ENCODE measurements at regions of chr1 and their contacts with region 1.

Region 1: GRCh38 chr1:1115786-1116700 is at the start of gene C1orf159:
- DNase-seq: peak; percentile 99
- H3K4me3 Mint-ChIP-seq: peak within 1 kb of the TSS; percentile 82
- H3K27ac Mint-ChIP-seq: peak within 1 kb of the TSS; percentile 65
- H3K4me1 Mint-ChIP-seq: peaks cover 17% of the 10 kb centered on the region
- H3K27me3 Mint-ChIP-seq: no peaks in the 10 kb centered on the region
- total RNA-seq, gene C1orf159: 14.9 to 18.6 TPM

Region 2: DNA sequence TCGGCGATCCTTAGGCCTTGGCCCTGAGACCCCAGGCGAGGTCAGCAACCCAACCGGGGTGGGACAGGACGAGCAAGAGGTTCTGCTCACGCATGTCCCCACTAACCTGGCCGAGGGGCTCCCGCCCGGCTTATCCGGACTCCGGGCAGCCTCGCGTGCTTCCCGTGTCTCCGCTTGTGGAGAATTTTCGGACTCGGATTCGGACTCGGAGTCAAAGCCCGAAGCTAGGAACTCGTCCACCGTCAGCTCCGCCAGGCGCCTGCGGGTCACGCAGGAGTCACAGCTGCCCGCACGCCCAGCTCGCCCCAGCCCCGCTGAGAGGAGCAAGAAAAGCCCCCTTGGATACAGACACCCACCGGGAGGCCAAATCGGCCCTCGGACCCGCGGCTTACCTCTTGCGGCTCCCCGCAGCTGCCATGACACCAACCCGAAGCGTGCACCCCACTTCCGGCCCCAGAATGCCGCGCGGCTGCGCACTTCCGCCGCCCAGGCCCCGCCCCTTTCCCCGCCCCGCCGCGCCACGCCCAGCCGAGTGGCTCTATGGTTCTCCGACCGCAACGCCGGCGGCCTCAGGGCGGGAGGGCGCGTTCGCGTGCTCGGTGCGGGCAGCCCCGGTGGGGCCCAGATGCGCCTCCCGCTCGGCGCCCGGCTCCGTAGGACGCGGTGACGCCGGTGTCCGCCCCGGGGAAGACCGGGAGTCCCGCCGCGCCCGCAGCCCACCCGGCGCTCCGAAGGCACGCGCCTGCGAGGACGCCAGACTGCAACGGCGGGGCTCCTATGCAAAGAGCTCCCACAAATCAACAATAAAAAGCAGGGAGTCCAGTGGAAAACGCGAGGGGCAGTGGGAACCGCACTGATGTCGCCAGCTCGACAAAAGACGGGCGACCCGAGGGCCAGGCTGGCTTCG is 157.0 kb before region 1 on chr1 and contains the start of gene NOC2L:
- CTCF ChIA-PET with region 1: no interaction called
- intact Hi-C with region 1: loop called (anchors 1 kb)
- DNase-seq: peak; percentile 97
- H3K4me3 Mint-ChIP-seq: peak within 1 kb of the TSS; percentile 98
- H3K27ac Mint-ChIP-seq: no peak within 1 kb of the TSS
- H3K4me1 Mint-ChIP-seq: peaks cover 17% of the 10 kb centered on the region
- H3K27me3 Mint-ChIP-seq: no peaks in the 10 kb centered on the region
- total RNA-seq, gene NOC2L: 113 to 119 TPM

Region 3: DNA sequence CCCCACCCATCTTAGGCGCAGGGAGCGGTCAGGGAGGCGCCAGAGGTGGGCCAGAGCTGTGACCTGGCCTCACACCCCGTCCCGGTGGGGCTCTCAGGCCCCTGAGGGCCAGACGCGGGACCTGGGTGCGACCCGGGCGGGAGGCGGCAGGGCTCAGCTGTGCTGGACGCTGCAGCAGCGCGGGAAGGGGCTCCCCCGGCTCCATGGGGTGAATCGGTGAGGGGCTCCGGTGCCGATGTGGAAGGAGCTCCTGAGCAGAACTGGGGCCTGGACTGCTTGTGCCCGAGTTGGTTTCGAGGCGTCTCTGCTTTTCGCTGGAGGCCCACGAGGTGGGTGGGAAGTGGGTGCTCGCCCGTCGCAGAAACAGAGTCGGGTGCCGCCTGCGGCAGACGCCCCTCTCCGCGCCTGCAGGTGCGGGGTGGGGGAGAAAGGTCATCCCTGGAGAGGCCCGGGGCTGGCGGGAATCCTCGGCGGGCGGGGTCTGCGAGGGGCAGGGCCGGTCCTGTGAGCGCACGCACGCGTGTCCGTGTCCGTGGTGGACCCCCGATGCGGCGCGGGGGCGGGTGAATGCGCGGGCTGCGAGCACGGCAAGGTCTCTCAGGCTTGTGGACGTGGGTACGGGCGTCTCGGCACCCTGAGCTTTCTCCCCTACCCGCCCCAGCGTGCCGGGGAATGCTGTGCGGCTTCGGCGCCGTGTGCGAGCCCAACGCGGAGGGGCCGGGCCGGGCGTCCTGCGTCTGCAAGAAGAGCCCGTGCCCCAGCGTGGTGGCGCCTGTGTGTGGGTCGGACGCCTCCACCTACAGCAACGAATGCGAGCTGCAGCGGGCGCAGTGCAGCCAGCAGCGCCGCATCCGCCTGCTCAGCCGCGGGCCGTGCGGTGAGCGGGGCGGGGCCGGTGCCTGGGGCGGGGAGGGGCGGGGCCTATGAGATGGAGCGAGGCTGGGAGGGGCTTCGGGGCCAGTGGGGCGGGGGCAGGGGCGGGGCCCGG is 75.7 kb before region 1 on chr1:
- CTCF ChIA-PET with region 1: no interaction called
- intact Hi-C with region 1: loop called (anchors 2 kb)
- DNase-seq: peak; percentile 84
- H3K4me3 Mint-ChIP-seq: peak overlapping the region; percentile 57
- H3K27ac Mint-ChIP-seq: no peak overlapping the region
- H3K4me1 Mint-ChIP-seq: peaks cover 19% of the 10 kb centered on the region
- H3K27me3 Mint-ChIP-seq: peaks cover 14% of the 10 kb centered on the region

Region 4: GRCh38 chr1:1100296-1100695 is 15.7 kb before region 1 on chr1:
- CTCF ChIA-PET with region 1: no interaction called
- intact Hi-C with region 1: no loop called
- DNase-seq: no peak
- H3K4me3 Mint-ChIP-seq: no peak overlapping the region
- H3K27ac Mint-ChIP-seq: no peak overlapping the region
- H3K4me1 Mint-ChIP-seq: peaks cover 54% of the 10 kb centered on the region
- H3K27me3 Mint-ChIP-seq: peaks cover 8% of the 10 kb centered on the region

Region 5: GRCh38 chr1:1200851-1201810 is 85.1 kb after region 1 on chr1:
- CTCF ChIA-PET with region 1: interaction called, 3 read pairs
- intact Hi-C with region 1: loop called (anchors 2 kb)
- DNase-seq: peak; percentile 91
- H3K4me3 Mint-ChIP-seq: peak overlapping the region; percentile 59
- H3K27ac Mint-ChIP-seq: peak overlapping the region; percentile 83
- H3K4me1 Mint-ChIP-seq: peaks cover 12% of the 10 kb centered on the region
- H3K27me3 Mint-ChIP-seq: no peaks in the 10 kb centered on the region

Region 6: DNA sequence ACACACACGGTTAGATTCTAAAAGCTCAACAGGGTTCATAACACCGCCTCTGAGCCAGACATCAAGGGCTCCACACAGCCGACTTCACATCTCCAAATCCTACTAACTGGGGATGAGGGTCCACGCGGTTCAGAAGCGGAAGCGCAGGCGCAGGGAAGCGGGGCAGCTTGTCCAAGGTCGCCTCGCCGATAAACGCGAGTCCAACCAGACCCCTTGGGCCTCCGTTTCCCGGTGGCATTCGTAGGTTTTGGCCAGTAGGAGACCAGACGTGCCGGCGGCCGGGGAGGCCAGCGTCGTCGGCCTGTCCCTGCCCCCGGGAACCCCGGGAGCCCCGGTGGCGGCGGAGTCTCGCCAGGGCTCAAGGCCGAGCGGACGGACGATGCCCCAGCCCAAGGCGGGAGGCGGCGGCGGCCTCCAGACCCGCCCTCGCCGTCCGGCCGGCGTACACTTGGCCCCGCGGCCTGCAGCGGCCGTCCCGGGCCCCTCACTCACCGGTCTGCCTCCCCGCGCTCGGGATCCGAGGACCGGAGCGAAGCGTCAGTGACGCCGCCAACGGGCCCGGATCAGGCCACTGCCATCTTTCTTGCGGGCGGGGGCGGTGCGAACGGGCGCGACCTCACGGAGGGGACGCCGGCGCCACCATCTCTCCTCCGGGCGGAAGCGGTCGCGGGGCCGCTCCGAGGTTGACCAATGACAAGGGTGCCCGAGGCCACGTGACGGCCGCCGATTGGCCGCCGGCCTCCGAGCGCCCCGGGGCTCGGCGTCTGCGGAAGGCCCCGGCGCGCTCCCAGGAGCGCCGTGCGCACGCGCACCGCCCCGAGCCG is 115.6 kb after region 1 on chr1 and contains the start of gene SDF4:
- CTCF ChIA-PET with region 1: interaction called, 3 read pairs
- intact Hi-C with region 1: loop called (anchors 1 kb)
- DNase-seq: peak; percentile 97
- H3K4me3 Mint-ChIP-seq: peak within 1 kb of the TSS; percentile 86
- H3K27ac Mint-ChIP-seq: peak within 1 kb of the TSS; percentile 86
- H3K4me1 Mint-ChIP-seq: peaks cover 35% of the 10 kb centered on the region
- H3K27me3 Mint-ChIP-seq: no peaks in the 10 kb centered on the region
- total RNA-seq, gene SDF4: 74.7 to 79.5 TPM

Region 7: GRCh38 chr1:1307908-1308755 is 192.1 kb after region 1 on chr1 and contains the starts of genes ACAP3 and PUSL1:
- CTCF ChIA-PET with region 1: no interaction called
- intact Hi-C with region 1: loop called (anchors 1 kb)
- DNase-seq: peak; percentile 88
- H3K4me3 Mint-ChIP-seq: peak within 1 kb of the TSS; percentile 79
- H3K27ac Mint-ChIP-seq: peak within 1 kb of the TSS; percentile 77
- H3K4me1 Mint-ChIP-seq: peaks cover 23% of the 10 kb centered on the region
- H3K27me3 Mint-ChIP-seq: no peaks in the 10 kb centered on the region
- total RNA-seq, gene ACAP3: 24.1 to 25.3 TPM
- total RNA-seq, gene PUSL1: 17.0 to 17.6 TPM

Measured in activated naive CD4-positive, alpha-beta T cell treated with anti-CD3 and anti-CD28 coated beads for 36 hours (primary cell).